ENCODE measurements at regions of chr9 and their contacts with region 1.

Region 1: GRCh38 chr9:133090187-133090586 is 28.4 kb downstream of the CEL start:
- DNase-seq: no peak
- H3K4me3 ChIP-seq: no peak overlapping the region
- H3K27ac ChIP-seq: no peak overlapping the region
- H3K4me1 ChIP-seq: no peaks in the 10 kb centered on the region
- H3K27me3 ChIP-seq: no peaks in the 10 kb centered on the region
- CTCF ChIP-seq: no peak
- EP300 ChIP-seq: no peak
- POLR2A ChIP-seq: no peak

Region 2: GRCh38 chr9:132973713-132974112 is 116.5 kb before region 1 on chr9:
- intact Hi-C with region 1: no loop called
- DNase-seq: no peak
- H3K4me3 ChIP-seq: no peak overlapping the region
- H3K27ac ChIP-seq: no peak overlapping the region
- H3K4me1 ChIP-seq: peaks cover 0 to 8% (median 0%) of the 10 kb centered on the region in 4 donors
- H3K27me3 ChIP-seq: peaks cover 0 to 66% (median 35%) of the 10 kb centered on the region in 3 donors
- CTCF ChIP-seq: no peak
- EP300 ChIP-seq: no peak
- POLR2A ChIP-seq: no peak

Region 3: DNA sequence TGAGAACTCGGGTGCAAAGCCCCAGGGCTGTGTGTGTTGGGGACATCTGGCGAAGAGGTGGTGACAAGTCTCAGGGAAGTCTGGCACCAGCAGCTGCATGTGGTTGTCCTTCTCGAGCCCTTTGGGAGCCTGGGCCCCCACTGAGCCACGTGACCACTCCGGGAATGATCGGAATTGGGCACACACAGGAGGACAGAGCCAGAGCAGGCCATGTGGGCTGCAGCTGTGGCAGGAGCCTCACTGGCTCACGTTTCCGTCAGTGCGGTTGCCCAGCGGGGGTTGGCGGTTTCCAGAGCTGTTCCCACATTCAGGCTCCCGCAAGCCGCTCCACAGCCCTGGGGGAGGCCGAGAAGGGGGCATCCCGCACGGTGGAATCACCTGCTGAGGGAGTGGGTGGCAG is 35.2 kb before region 1 on chr9:
- intact Hi-C with region 1: loop called (anchors 5 kb)
- DNase-seq: no peak
- H3K4me3 ChIP-seq: no peak overlapping the region
- H3K27ac ChIP-seq: no peak overlapping the region
- H3K4me1 ChIP-seq: no peaks in the 10 kb centered on the region
- H3K27me3 ChIP-seq: no peaks in the 10 kb centered on the region
- CTCF ChIP-seq: no peak
- EP300 ChIP-seq: no peak
- POLR2A ChIP-seq: no peak

Measured in sigmoid colon (tissue), 7 donors.